ENCODE measurements at regions of chr12 and their contacts with region 1.

Region 1: DNA sequence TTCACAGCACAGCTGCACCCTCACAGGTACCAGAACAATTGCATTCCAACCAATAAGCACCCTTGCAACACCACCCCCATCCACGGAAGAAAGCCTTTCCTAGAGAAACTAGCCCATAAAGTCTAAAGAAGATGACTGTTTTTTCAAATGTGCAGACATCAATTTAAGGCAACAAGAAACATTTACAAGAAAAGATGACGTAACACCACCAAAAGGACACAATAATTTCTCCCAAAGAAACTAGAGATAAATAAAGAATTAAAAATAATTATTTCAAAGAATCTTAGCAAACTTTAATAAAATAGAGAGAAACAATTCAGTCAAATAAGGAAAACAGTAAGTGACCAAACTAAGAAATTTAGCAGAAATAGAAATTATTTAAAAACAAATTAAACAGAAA is 352.3 kb upstream of the ATXN7L3B start:
- DNase-seq: no peak
- ATAC-seq: no peak
- H3K4me3 ChIP-seq: no peak overlapping the region
- H3K27ac ChIP-seq: no peak overlapping the region
- H3K4me1 ChIP-seq: no peaks in the 10 kb centered on the region
- H3K27me3 ChIP-seq: no peaks in the 10 kb centered on the region
- CTCF ChIP-seq: no peak

Region 2: DNA sequence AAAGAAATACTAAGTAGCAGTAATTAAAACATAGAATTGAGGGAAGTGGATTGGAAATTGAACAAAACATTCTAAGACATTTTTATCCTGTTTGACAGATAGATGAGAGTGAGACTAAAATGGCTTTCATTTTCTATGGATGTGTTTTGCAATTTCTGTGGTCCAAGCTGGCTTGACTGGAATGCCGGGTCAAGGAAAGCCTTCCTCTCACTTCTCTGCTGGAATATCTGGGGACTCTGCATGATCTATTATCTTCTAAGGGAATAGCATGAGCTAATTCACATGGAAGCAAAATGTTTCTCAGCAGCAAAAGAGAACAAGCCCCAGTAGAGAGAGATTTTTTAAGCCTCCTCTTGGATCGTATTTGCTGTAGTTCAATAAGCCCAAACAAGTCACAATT is 55.7 kb before region 1 on chr12:
- intact Hi-C with region 1: no loop called
- DNase-seq: no peak
- ATAC-seq: no peak
- H3K4me3 ChIP-seq: no peak overlapping the region
- H3K27ac ChIP-seq: no peak overlapping the region
- H3K4me1 ChIP-seq: no peaks in the 10 kb centered on the region
- H3K27me3 ChIP-seq: no peaks in the 10 kb centered on the region
- CTCF ChIP-seq: no peak

Region 3: GRCh38 chr12:74204236-74204635 is 18.9 kb after region 1 on chr12:
- intact Hi-C with region 1: loop called in 1 of 10 experiments (anchors 2 kb)
- DNase-seq: no peak
- ATAC-seq: no peak
- H3K4me3 ChIP-seq: no peak overlapping the region
- H3K27ac ChIP-seq: no peak overlapping the region
- H3K4me1 ChIP-seq: no peaks in the 10 kb centered on the region
- H3K27me3 ChIP-seq: no peaks in the 10 kb centered on the region
- CTCF ChIP-seq: no peak